ENCODE measurements at regions of chr16 and their contacts with region 1.

Region 1: GRCh38 chr16:66608241-66609138 is 4.0 kb downstream of the CMTM3 start:
- DNase-seq: no peak
- H3K4me3 ChIP-seq: no peak overlapping the region
- H3K27ac ChIP-seq: peak overlapping the region; percentile 27
- H3K4me1 ChIP-seq: peaks cover 46% of the 10 kb centered on the region
- H3K27me3 ChIP-seq: no peaks in the 10 kb centered on the region
- CTCF ChIP-seq: peak; percentile 69 to 88 (median 82)
- POLR2A ChIP-seq: no peak

Region 2: DNA sequence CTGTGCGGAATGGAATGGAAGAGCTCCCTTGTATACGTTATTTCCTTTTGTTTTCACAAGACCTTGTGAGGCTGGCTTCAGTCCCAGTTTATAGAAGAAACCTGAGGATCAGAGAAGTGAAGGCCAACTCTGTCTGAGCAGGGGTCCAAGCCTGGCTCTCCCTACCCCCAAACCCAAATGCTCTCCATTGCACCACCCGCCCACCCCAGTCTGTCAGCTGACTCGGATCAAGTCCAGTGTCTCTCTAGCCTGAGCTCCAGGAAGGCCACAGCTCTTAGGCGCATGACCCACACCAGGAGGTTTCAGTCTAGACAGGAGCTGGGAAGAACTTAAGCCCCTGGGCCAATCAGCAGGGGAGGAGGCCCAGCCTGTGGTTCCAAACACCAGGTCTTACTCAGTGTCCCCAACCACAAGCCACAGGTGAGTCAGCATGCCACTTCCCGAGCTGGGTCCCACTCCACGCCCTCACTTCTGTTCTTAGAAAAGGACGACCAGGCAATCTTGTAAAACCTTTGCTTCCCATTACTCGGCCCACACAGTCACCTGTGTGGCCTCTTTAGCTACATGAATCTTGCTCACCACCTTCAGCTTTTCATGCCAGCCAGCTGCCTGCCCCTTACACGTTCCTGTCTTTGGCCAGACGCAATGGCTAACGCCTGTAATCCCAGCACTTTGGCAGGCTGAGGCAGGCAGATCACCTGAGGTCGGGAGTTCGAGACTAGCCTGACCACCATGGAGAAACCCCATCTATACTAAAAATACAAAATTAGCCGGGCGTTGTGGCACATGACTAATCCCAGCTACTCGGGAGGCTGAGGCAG is 86.3 kb before region 1 on chr16:
- intact Hi-C with region 1: loop called (anchors 10 kb)
- DNase-seq: peak in 1 of 2 donors; percentile 88
- H3K4me3 ChIP-seq: no peak overlapping the region
- H3K27ac ChIP-seq: peak overlapping the region; percentile 50
- H3K4me1 ChIP-seq: peaks cover 40% of the 10 kb centered on the region
- H3K27me3 ChIP-seq: no peaks in the 10 kb centered on the region
- CTCF ChIP-seq: no peak
- POLR2A ChIP-seq: no peak

Region 3: DNA sequence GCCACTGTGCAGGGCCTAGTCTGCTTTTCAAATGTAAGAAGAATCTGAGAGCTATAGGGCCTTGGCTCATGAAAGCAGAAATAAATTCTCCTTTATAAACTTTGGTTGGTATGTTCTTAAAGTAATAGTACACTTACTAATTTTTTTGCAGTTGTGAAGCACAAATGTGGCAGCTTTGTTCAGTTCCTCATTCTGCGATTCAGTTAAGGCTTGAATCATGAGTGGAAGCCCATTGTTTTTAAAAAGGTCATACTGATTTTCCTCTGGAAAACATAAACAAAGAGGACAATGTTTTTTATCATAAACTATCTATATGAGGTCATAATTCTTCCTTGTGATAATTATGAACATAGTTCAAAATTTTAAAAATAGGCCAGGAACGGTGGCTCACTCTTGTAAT is 166.5 kb after region 1 on chr16:
- intact Hi-C with region 1: no loop called
- DNase-seq: no peak
- H3K4me3 ChIP-seq: no peak overlapping the region
- H3K27ac ChIP-seq: no peak overlapping the region
- H3K4me1 ChIP-seq: no peaks in the 10 kb centered on the region
- H3K27me3 ChIP-seq: no peaks in the 10 kb centered on the region
- CTCF ChIP-seq: no peak
- POLR2A ChIP-seq: no peak

Region 4: GRCh38 chr16:68445458-68445857 is 1837.0 kb after region 1 on chr16:
- intact Hi-C with region 1: no loop called
- DNase-seq: no peak
- H3K4me3 ChIP-seq: no peak overlapping the region
- H3K27ac ChIP-seq: no peak overlapping the region
- H3K4me1 ChIP-seq: peaks cover 24% of the 10 kb centered on the region
- H3K27me3 ChIP-seq: no peaks in the 10 kb centered on the region
- CTCF ChIP-seq: peak in 1 of 3 experiments; percentile 22
- POLR2A ChIP-seq: no peak

Measured in vagina (tissue), 2 donors.